Heart right ventricle (tissue), 16 donors: ENCODE measurements at regions of chr20 and their contacts with region 1.

Region 1: DNA sequence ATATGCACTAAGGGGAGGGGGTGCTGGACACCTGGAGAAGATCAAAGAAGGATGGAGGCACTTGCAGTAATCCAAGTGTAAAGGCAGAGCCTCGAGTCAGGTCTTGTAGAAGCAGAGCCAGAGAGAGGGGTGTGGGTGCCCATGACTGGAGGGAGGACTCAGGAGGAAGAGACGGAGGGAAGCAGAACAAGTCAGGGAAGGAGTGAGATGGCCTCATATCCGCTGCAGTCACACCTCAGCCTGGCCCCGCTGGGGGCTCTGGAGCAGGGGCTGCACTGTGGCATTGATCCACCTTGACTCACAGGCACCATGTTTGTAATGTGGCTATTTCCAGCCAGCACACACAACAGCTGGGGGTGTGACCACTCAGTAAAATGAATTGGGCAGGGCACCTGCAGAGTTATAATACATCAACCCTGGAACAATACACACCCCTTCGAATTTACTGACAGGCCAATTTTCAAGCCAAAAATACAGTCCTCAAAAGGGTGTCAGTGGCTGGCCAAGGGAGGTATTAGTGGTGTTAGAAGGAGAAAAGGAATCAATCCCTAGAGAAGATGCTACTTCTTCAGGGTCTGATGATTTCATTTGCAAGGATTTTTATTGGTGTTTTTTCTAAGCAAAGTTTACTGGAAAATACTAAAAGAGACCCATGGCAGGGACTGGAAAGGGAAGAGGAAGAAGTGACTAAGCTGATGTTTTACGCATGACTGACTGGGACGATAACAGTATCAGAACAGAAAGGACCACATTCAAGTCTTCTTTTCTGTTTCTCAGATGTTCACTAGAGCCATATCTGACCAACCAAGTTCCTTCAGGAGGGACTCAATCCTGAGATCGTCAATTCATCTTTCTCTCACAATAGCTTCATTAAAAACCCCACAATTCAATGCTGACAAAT is 18.9 kb upstream of the NXT1 start:
- DNase-seq: no peak
- ATAC-seq: peak in 1 of 8 donors; percentile 28
- H3K4me3 ChIP-seq: no peak overlapping the region
- H3K27ac ChIP-seq: peak overlapping the region in 1 of 10 donors; percentile 36
- H3K4me1 ChIP-seq: peaks cover 0 to 13% (median 7%) of the 10 kb centered on the region in 9 donors
- H3K27me3 ChIP-seq: no peaks in the 10 kb centered on the region
- CTCF ChIP-seq: no peak

Region 2: DNA sequence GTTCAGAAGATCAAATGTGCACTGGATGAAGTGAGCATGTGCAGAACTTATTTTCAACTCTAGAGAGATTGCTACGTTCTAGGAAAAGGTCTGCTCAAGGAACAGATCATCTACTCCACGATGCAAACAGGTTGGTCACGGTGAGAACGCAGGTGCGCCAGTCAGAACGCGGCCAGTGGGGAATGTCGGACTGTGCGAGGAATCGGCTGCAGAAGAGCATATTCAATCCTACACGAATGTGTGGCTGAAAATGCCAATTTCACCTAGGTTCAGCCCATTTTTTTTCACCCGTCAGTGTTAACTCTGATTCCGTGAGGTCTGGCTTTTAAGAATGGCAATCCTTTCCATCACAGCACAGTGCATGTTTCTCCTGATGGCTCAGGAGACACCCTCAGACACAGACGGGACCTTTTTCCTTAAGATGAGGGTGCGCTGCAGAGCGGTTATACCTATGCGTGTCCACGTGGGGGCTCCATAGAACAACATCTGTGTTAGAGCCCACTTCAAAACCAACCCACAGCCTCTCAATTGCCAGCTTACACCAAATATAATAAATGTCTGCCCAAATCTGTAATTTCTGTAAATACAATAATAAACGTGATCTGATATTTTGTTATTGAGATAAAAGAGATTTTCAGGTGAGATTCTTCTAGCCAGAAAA is 997.7 kb before region 1 on chr20:
- intact Hi-C with region 1: loop called in 2 of 10 experiments (anchors 5 to 10 kb)
- DNase-seq: peak; percentile 18 to 19
- ATAC-seq: peak in 5 of 8 donors; percentile 49 to 82 (median 62)
- H3K4me3 ChIP-seq: no peak overlapping the region
- H3K27ac ChIP-seq: no peak overlapping the region
- H3K4me1 ChIP-seq: peaks cover 0 to 1% (median 0%) of the 10 kb centered on the region in 9 donors
- H3K27me3 ChIP-seq: peaks cover 0 to 95% (median 39%) of the 10 kb centered on the region in 7 donors
- CTCF ChIP-seq: peak in 8 of 9 donors; percentile 44 to 76 (median 70)

Region 3: GRCh38 chr20:22700367-22700766 is 631.3 kb before region 1 on chr20:
- intact Hi-C with region 1: loop called in 1 of 10 experiments (anchors 5 kb)
- DNase-seq: no peak
- ATAC-seq: no peak
- H3K4me3 ChIP-seq: no peak overlapping the region
- H3K27ac ChIP-seq: no peak overlapping the region
- H3K4me1 ChIP-seq: peaks cover 0 to 24% (median 3%) of the 10 kb centered on the region in 9 donors
- H3K27me3 ChIP-seq: no peaks in the 10 kb centered on the region
- CTCF ChIP-seq: no peak

Region 4: DNA sequence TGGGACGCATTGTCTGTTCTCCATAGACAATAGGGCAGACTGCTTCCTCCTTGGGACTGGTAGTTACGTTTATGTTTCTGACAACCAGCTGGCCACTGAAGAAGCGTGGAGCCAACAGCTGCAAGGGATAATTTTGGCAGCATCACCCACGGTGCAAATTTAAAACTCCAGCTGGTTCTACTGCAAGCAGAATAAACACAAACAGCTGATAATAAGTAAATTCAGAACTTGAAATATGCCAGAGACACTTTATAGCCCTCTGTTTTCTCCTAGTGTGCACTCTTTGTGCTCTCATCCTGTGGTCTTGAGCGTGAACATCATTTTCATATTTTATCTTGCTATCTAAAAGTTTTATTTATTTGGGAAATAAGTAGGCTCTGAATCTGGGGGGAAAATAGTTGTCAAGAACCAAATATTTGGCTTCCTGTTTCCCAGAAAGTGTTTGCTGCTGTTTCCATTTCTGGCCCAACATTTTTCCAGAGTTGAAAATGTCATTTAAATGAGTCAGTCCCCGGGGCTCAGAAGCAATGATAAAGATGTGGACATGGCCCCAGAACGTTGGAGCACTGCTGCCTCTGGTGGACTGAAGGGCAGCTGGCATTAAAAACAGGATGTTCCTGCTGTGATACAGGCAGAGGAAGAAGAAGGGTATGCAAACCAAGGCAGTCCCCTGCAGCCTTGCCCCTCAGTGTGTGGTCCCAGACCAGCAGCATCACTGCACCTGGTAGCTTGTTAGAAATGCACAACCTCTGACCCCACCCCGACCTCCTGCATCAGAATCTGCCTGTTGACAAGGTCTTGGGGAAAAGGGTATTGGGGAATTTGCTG is 269.8 kb before region 1 on chr20:
- intact Hi-C with region 1: loop called in 4 of 10 experiments (anchors 10 kb)
- DNase-seq: peak; percentile 44 to 69
- ATAC-seq: peak; percentile 82 to 90 (median 86)
- H3K4me3 ChIP-seq: peak overlapping the region in 1 of 10 donors; percentile 18
- H3K27ac ChIP-seq: peak overlapping the region in 9 of 10 donors; percentile 46 to 84 (median 77)
- H3K4me1 ChIP-seq: peaks cover 22 to 51% (median 47%) of the 10 kb centered on the region in 9 donors
- H3K27me3 ChIP-seq: no peaks in the 10 kb centered on the region
- CTCF ChIP-seq: peak; percentile 26 to 72 (median 53)

Region 5: DNA sequence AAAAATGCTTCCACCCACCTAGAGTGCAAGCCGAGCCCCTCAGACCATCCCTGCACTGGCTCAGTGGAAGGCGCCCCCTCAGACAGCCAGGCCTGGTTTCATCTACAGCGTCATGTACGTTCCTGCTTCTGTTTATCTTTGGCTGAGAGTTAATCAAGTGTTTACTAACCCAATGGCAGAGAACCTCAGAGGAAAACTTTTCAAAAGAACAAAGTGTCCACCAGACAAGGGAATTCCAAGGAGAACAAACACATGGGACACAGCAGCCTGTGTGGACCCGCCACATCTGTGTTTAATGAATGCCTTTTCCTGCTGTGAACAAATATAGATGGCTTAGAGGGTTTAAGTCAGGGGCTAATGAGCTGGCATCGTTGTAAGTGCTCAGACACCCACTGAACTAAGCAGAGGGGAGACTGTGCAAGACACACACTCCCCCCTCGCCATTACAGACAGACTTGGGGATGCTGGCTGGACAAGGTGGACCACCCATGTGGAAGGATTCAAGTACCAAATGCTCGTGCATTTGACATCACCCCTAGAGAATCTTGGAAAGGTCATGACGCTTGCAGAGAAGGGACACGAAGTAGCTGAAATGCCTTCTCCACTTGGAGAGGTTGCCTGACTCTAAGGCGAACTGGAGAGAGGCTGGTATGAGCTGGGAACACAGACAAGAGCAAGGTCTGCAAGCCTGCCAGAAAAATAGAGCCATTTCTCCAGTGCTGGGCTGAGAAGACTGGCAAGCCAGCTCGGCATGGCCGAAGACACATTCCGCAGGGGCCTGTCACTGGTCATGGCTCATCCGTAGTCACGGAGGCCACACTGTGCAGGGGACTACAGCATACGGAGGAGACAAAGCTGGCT is 34.6 kb before region 1 on chr20:
- intact Hi-C with region 1: no loop called
- DNase-seq: no peak
- ATAC-seq: peak in 1 of 8 donors; percentile 30
- H3K4me3 ChIP-seq: no peak overlapping the region
- H3K27ac ChIP-seq: no peak overlapping the region
- H3K4me1 ChIP-seq: peaks cover 0 to 19% (median 12%) of the 10 kb centered on the region in 9 donors
- H3K27me3 ChIP-seq: peaks cover 0 to 7% (median 0%) of the 10 kb centered on the region in 7 donors
- CTCF ChIP-seq: no peak